ENCODE measurements at regions of chr9 and their contacts with region 1.

Region 1: DNA sequence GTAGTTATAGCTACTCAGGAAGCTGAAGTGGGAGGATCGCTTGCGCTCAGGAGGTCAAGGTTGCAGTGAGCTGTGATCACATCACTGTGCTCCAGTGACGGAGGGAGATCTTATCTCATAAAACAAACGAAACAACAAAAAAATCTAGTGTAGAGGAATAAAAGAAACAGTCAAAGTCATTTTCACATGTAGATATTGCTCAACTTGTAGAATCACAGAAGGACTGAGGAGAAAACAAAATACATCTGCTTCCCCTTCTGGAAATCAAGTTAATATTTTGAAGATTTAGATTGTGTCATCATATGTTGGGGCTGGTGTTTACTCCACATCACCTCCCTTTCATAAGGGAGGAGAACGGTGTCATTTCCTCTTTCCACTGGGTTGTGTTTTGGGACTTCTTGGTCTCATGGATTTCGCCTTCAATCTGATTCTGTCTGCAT is 8.2 kb upstream of the SLC46A2 start:
- DNase-seq: no peak
- ATAC-seq: no peak

Region 2: GRCh38 chr9:112844771-112845542 is 53.9 kb before region 1 on chr9:
- intact Hi-C with region 1: loop called (anchors 1 kb)
- DNase-seq: peak; percentile 84
- ATAC-seq: peak; percentile 56

Region 3: GRCh38 chr9:113154471-113154870 is 255.6 kb after region 1 on chr9:
- intact Hi-C with region 1: no loop called
- DNase-seq: no peak
- ATAC-seq: no peak